Posterior cingulate gyrus (tissue), 11 donors: ENCODE measurements at regions of chr2 and their contacts with region 1.

Region 1: GRCh38 chr2:158753641-158754611 is 41.2 kb upstream of the DAPL1 start:
- DNase-seq: peak in 5 of 10 donors; percentile 40 to 87 (median 53)

Region 2: GRCh38 chr2:158024288-158024898 is 729.5 kb before region 1 on chr2:
- intact Hi-C with region 1: loop called (anchors 2 kb)
- DNase-seq: peak in 9 of 10 donors; percentile 43 to 91 (median 60)

Region 3: GRCh38 chr2:158179660-158180059 is 574.3 kb before region 1 on chr2:
- intact Hi-C with region 1: loop called (anchors 5 kb)
- DNase-seq: no peak

Region 4: DNA sequence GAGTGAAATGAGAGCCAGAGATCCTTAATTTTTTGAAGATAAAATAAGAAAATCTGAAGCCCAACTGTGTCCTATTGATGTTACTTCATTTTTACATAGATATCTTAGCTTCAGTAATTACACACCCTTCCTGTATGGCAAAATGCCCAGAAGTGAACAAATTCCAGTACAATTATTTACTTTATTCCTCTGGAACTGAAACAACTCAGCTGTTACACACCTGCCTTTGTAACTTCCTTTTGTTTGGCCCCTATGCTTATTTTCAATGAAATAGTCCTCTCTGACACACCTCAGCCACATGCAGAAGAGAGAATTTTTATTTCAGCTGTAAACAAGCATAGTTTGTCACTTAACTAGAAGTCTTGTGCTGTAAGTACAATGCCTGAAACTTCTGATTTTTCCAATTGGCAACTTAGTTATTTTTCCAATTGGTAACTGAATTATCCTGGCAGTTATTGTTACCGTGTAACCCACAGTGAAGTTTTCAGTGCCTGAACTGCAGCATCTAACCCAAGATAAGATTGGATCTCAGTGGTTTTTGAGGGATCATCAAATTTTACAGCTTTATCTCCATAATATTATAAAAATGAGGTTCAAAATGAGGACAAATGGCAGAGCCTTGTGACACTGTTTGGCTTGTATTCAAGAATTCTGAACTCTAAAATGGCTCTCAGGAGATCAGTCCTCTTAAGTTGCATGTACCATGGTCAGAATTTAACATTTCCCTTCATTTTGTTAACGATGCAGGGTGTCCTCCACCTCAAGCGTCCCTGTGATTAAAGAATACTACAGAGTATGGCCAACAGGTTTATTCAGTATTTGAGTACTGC is 214.5 kb before region 1 on chr2:
- intact Hi-C with region 1: loop called (anchors 10 kb)
- DNase-seq: no peak

Region 5: GRCh38 chr2:159044804-159045286 is 290.9 kb after region 1 on chr2:
- intact Hi-C with region 1: no loop called
- DNase-seq: no peak